Activated CD8-positive, alpha-beta memory T cell treated with anti-CD3 and anti-CD28 coated beads, Interleukin-2, amount 10 ng/mL, durations not matched to agents 7 days and 5 days (primary cell): ENCODE measurements at regions of chr11 and their contacts with region 1.

Region 1: GRCh38 chr11:2151500-2152257 is 9.3 kb downstream of the INS start:
- DNase-seq: peak; percentile 85
- ATAC-seq: peak; percentile 77
- H3K4me3 Mint-ChIP-seq: no peak overlapping the region
- H3K27ac Mint-ChIP-seq: no peak overlapping the region
- H3K4me1 Mint-ChIP-seq: peaks cover 3% of the 10 kb centered on the region
- H3K27me3 Mint-ChIP-seq: peaks cover 37% of the 10 kb centered on the region

Region 2: GRCh38 chr11:1652771-1653540 is 498.7 kb before region 1 on chr11:
- CTCF ChIA-PET with region 1: interaction called, 27 read pairs
- DNase-seq: peak; percentile 76
- ATAC-seq: peak; percentile 87
- H3K4me3 Mint-ChIP-seq: no peak overlapping the region
- H3K27ac Mint-ChIP-seq: no peak overlapping the region
- H3K4me1 Mint-ChIP-seq: no peaks in the 10 kb centered on the region
- H3K27me3 Mint-ChIP-seq: peaks cover 22% of the 10 kb centered on the region

Region 3: GRCh38 chr11:1852877-1853276 is 298.8 kb before region 1 on chr11 and contains the start of gene LSP1:
- CTCF ChIA-PET with region 1: interaction called, 14 read pairs
- DNase-seq: peak; percentile 95
- ATAC-seq: peak; percentile 59
- H3K4me3 Mint-ChIP-seq: peak within 1 kb of the TSS; percentile 99
- H3K27ac Mint-ChIP-seq: peak within 1 kb of the TSS; percentile 99
- H3K4me1 Mint-ChIP-seq: peaks cover 55% of the 10 kb centered on the region
- H3K27me3 Mint-ChIP-seq: no peaks in the 10 kb centered on the region
- total RNA-seq, gene LSP1: 574 to 702 TPM

Region 4: GRCh38 chr11:1946812-1947484 is 204.7 kb before region 1 on chr11 and contains the start of gene MRPL23:
- CTCF ChIA-PET with region 1: interaction called, 17 read pairs
- DNase-seq: no peak
- ATAC-seq: peak; percentile 81
- H3K4me3 Mint-ChIP-seq: no peak within 1 kb of the TSS
- H3K27ac Mint-ChIP-seq: no peak within 1 kb of the TSS
- H3K4me1 Mint-ChIP-seq: no peaks in the 10 kb centered on the region
- H3K27me3 Mint-ChIP-seq: no peaks in the 10 kb centered on the region
- total RNA-seq, gene MRPL23: 109 to 114 TPM

Region 5: GRCh38 chr11:2031058-2031457 is 120.6 kb before region 1 on chr11:
- CTCF ChIA-PET with region 1: interaction called, 315 read pairs
- DNase-seq: no peak
- ATAC-seq: no peak
- H3K4me3 Mint-ChIP-seq: no peak overlapping the region
- H3K27ac Mint-ChIP-seq: no peak overlapping the region
- H3K4me1 Mint-ChIP-seq: no peaks in the 10 kb centered on the region
- H3K27me3 Mint-ChIP-seq: no peaks in the 10 kb centered on the region

Region 6: GRCh38 chr11:2077061-2077802 is 74.4 kb before region 1 on chr11:
- CTCF ChIA-PET with region 1: interaction called, 14 read pairs
- DNase-seq: peak; percentile 78
- ATAC-seq: peak; percentile 91
- H3K4me3 Mint-ChIP-seq: no peak overlapping the region
- H3K27ac Mint-ChIP-seq: peak overlapping the region; percentile 77
- H3K4me1 Mint-ChIP-seq: peaks cover 26% of the 10 kb centered on the region
- H3K27me3 Mint-ChIP-seq: peaks cover 28% of the 10 kb centered on the region

Region 7: DNA sequence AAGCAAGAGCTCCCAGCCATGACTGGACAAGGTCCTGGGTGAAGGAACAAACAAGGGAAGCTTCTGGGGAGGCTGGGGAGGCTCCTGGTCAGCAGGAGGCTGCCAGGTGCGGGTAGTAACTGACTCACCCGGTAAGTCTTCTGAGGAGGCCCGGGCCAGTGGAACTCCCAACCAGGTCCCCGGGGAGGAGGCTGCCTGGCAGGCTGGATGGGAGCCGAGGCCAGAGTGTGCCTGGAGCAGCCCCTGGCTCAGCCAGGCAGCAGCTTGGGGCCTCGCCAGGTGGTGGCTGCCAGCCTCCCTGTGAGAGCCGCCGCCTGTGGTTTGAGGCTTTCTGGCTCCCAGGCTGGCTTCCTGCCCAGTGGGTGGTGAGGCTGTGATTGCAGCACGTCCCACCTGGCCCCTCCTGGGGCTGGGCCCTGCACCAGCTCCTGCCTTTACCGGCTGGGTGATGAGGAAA is 58.7 kb before region 1 on chr11:
- CTCF ChIA-PET with region 1: no interaction called
- DNase-seq: peak; percentile 53
- ATAC-seq: no peak
- H3K4me3 Mint-ChIP-seq: no peak overlapping the region
- H3K27ac Mint-ChIP-seq: no peak overlapping the region
- H3K4me1 Mint-ChIP-seq: peaks cover 6% of the 10 kb centered on the region
- H3K27me3 Mint-ChIP-seq: peaks cover 12% of the 10 kb centered on the region

Region 8: GRCh38 chr11:2269601-2270321 is 118.1 kb after region 1 on chr11:
- CTCF ChIA-PET with region 1: no interaction called
- DNase-seq: peak; percentile 47
- ATAC-seq: peak; percentile 50
- H3K4me3 Mint-ChIP-seq: peak overlapping the region; percentile 36
- H3K27ac Mint-ChIP-seq: no peak overlapping the region
- H3K4me1 Mint-ChIP-seq: peaks cover 30% of the 10 kb centered on the region
- H3K27me3 Mint-ChIP-seq: peaks cover 46% of the 10 kb centered on the region